ENCODE measurements at regions of chr3 and their contacts with region 1.

Region 1: DNA sequence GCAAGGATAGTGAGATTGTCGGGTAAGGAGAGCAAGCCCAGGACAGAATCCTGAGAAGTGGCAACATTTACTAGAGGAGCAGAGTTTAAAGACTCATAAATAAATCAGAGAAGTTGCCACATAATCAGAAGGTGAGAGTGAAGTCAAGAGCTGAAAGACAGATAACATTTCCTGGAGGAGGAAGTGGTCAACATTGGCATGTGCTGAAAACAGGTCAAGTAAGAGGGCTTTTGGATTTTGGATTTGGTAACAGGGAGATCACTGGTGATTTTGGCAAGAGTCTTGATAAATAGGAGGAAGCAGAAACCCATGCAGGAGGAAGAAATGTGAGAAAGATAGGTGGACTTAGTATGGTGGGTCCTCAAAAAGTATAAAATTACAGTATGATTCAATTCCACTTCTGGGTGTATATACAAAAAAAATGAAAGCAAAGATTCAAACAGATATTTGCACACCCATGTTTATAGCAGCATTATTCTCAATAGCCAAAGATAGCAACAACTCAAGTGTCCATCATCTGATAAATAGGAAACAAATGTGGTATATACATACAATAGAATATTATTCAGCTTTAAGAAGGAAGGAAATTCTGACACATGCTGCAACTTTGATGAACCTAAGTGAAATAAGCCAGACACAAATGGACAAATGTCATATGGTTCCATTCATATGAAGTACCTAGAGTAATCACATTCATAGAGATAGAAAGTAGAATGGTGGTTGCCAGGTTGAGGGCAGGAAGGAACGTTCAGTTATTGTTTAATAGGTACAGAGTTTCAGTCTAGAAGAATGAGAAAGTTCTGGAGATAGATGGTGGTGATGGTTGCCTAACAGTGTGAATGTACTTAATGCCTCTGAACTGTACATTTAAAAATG is 27.3 kb upstream of the MBNL1 start:
- DNase-seq: no peak
- ATAC-seq: peak; percentile 69
- H3K4me3 ChIP-seq: no peak overlapping the region
- H3K27ac ChIP-seq: peak overlapping the region; percentile 91
- H3K4me1 ChIP-seq: peaks cover 27% of the 10 kb centered on the region
- H3K27me3 ChIP-seq: no peaks in the 10 kb centered on the region
- CTCF ChIP-seq: no peak
- EP300 ChIP-seq: no peak
- POLR2A ChIP-seq: no peak
- RAD21 ChIP-seq: no peak

Region 2: GRCh38 chr3:151999936-152000335 is 241.4 kb before region 1 on chr3:
- CTCF ChIA-PET with region 1: no interaction called
- POLR2A ChIA-PET with region 1: no interaction called
- RAD21 ChIA-PET with region 1: no interaction called
- SMC1A ChIA-PET with region 1: no interaction called
- in situ Hi-C with region 1: no loop called
- intact Hi-C with region 1: no loop called
- DNase-seq: no peak
- ATAC-seq: no peak
- H3K4me3 ChIP-seq: no peak overlapping the region
- H3K27ac ChIP-seq: no peak overlapping the region
- H3K4me1 ChIP-seq: no peaks in the 10 kb centered on the region
- H3K27me3 ChIP-seq: no peaks in the 10 kb centered on the region
- CTCF ChIP-seq: no peak
- EP300 ChIP-seq: no peak
- POLR2A ChIP-seq: no peak
- RAD21 ChIP-seq: no peak

Region 3: GRCh38 chr3:152193673-152194267 is 47.6 kb before region 1 on chr3:
- CTCF ChIA-PET with region 1: interaction called, 3 read pairs
- POLR2A ChIA-PET with region 1: interaction called, 5 read pairs
- RAD21 ChIA-PET with region 1: interaction called, 69 read pairs
- SMC1A ChIA-PET with region 1: interaction called, 74 read pairs
- in situ Hi-C with region 1: no loop called
- intact Hi-C with region 1: loop called (anchors 2 kb)
- DNase-seq: no peak
- ATAC-seq: peak; percentile 67
- H3K4me3 ChIP-seq: peak overlapping the region; percentile 44; the same call in 1 of the 2 replicates
- H3K27ac ChIP-seq: peak overlapping the region; percentile 48; the same call in 1 of the 2 replicates
- H3K4me1 ChIP-seq: peaks cover 29% of the 10 kb centered on the region
- H3K27me3 ChIP-seq: no peaks in the 10 kb centered on the region
- CTCF ChIP-seq: no peak
- EP300 ChIP-seq: no peak
- POLR2A ChIP-seq: no peak
- RAD21 ChIP-seq: no peak; the same call in 1 of the 2 replicates

Region 4: GRCh38 chr3:152205097-152205593 is 36.2 kb before region 1 on chr3:
- CTCF ChIA-PET with region 1: interaction called, 14 read pairs
- POLR2A ChIA-PET with region 1: interaction called, 22 read pairs
- RAD21 ChIA-PET with region 1: interaction called, 69 read pairs
- SMC1A ChIA-PET with region 1: interaction called, 74 read pairs
- in situ Hi-C with region 1: no loop called
- intact Hi-C with region 1: loop called (anchors 2 kb)
- DNase-seq: no peak
- ATAC-seq: peak; percentile 53
- H3K4me3 ChIP-seq: peak overlapping the region; percentile 30
- H3K27ac ChIP-seq: peak overlapping the region; percentile 82
- H3K4me1 ChIP-seq: peaks cover 11% of the 10 kb centered on the region; the same call in 1 of the 2 replicates
- H3K27me3 ChIP-seq: no peaks in the 10 kb centered on the region
- CTCF ChIP-seq: no peak
- EP300 ChIP-seq: no peak
- POLR2A ChIP-seq: no peak
- RAD21 ChIP-seq: no peak

Region 5: GRCh38 chr3:152222327-152222726 is 19.1 kb before region 1 on chr3:
- CTCF ChIA-PET with region 1: interaction called, 11 read pairs
- POLR2A ChIA-PET with region 1: no interaction called
- RAD21 ChIA-PET with region 1: interaction called, 12 read pairs
- SMC1A ChIA-PET with region 1: interaction called, 8 read pairs
- in situ Hi-C with region 1: no loop called
- intact Hi-C with region 1: no loop called
- DNase-seq: no peak
- ATAC-seq: peak; percentile 38; the same call in 2 of the 3 replicates
- H3K4me3 ChIP-seq: no peak overlapping the region
- H3K27ac ChIP-seq: no peak overlapping the region
- H3K4me1 ChIP-seq: no peaks in the 10 kb centered on the region
- H3K27me3 ChIP-seq: no peaks in the 10 kb centered on the region
- CTCF ChIP-seq: no peak
- EP300 ChIP-seq: no peak
- POLR2A ChIP-seq: no peak
- RAD21 ChIP-seq: no peak

Region 6: DNA sequence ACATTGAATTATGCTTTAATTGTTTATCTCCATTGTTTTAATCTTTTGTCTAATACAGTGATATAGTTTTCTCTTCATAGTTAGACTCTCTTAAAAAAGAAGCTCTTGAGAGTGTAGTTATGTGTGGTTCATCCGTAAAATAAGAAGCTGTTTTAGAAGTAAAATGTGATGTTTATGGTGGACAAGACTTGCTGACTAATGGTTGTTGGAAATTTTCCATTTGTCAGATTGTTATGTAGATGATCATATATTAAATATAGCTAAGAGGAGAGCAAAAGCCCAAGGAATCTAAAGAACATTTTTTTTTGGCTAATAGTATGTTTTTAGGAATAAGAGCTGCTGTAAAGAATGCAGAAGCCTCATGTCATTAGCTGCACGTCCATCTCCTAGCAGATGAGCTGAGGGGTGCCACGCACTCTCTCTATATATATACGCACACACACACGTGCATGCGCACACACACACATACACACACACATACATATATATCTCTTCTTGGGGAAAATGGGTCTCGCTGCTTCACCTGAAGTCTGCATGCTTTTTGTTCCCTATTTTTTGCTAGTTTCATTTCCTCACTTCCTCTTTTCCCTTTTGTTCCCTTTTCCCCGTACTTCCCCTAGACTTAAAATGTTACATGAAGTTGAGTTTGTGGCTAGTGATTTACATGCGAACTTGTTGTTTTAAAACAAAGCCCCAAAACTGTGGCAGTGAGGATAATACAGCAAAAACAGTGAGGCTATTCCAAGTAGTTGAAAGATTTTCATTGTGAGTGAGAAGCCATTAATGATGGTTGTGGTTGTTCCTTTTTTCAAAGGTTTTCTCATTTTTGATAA is 135.2 kb after region 1 on chr3:
- CTCF ChIA-PET with region 1: no interaction called
- POLR2A ChIA-PET with region 1: interaction called, 4 read pairs
- RAD21 ChIA-PET with region 1: interaction called, 10 read pairs
- SMC1A ChIA-PET with region 1: interaction called, 5 read pairs
- in situ Hi-C with region 1: no loop called
- intact Hi-C with region 1: no loop called
- DNase-seq: peak; percentile 97
- ATAC-seq: peak; percentile 83
- H3K4me3 ChIP-seq: no peak overlapping the region; the same call in 1 of the 2 replicates
- H3K27ac ChIP-seq: peak overlapping the region; percentile 90
- H3K4me1 ChIP-seq: peaks cover 30% of the 10 kb centered on the region
- H3K27me3 ChIP-seq: no peaks in the 10 kb centered on the region
- CTCF ChIP-seq: no peak
- EP300 ChIP-seq: peak; percentile 95 to 99
- POLR2A ChIP-seq: peak; percentile 53
- RAD21 ChIP-seq: no peak

Measured in GM12878 (cell line).